ENCODE measurements at regions of chr4 and their contacts with region 1.

Region 1: DNA sequence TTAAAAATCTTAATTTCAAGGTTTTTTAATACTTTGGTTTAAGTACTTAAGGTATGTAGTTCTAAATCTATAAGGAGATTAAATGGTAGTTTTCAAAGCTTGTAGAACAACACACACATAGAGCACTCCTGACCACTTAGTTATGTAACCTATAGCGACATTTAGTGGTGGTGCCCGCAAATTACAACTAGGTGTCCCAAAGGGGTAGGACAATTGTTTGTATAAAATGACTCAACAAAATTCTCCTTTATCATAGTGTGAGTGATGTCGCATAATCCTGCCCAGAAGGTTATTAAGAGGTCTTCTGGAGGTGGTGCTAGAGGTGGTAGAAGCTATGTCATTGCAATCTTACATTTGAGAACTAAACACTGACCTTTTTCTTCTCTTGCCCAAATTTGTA is 373.0 kb upstream of the RASGEF1B start:
- DNase-seq: peak; percentile 80 to 89 (median 84)
- ATAC-seq: peak; percentile 94
- H3K4me3 ChIP-seq: no peak overlapping the region
- H3K27ac ChIP-seq: no peak overlapping the region
- H3K4me1 ChIP-seq: no peaks in the 10 kb centered on the region
- H3K27me3 ChIP-seq: no peaks in the 10 kb centered on the region
- CTCF ChIP-seq: peak; percentile 38 to 87 (median 81)
- POLR2A ChIP-seq: no peak

Region 2: DNA sequence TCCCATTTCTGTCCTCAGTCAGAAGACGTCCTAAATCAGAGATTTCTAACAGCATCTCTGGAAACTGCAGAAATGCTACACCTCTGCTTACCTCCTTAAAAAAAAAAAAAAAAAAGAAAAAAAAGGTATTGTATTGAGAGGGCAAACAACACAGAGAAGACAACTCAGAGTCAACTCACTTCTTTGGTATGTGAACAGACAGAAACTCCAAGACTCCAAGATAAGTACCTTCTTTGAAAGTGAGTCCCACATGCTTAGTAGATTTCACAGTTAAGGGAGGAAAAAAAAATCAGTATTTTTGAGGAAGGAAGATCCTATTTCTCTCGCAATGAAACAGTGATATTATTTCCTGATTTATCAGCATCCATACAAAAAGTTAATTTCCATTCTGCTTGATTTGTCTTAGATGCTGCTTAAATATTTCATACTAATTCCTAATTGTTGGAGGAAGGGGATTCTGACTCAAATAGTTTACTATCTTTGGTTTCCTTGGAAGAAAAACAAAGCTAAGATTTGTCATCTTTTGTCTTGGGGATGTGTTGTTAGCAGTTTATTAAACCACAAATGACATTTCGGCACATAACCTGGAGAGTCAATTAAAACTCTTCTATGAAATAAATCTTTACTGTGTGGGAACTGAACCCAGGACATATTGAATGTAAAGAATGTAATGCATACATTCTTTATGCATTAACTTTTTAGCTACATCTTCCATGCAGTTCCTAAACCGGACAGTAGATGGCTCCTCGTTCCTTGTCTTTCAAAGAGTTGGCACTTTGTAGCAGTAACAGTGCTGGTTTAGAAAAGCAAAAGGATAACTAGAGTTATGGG is 377.7 kb before region 1 on chr4:
- intact Hi-C with region 1: loop called (anchors 5 kb)
- DNase-seq: peak; percentile 71 to 80 (median 75)
- ATAC-seq: no peak
- H3K4me3 ChIP-seq: no peak overlapping the region
- H3K27ac ChIP-seq: no peak overlapping the region
- H3K4me1 ChIP-seq: peaks cover 15% of the 10 kb centered on the region
- H3K27me3 ChIP-seq: no peaks in the 10 kb centered on the region
- CTCF ChIP-seq: peak; percentile 56 to 93 (median 88)
- POLR2A ChIP-seq: no peak

Region 3: GRCh38 chr4:81796790-81797528 is 47.8 kb before region 1 on chr4:
- intact Hi-C with region 1: no loop called
- DNase-seq: no peak
- ATAC-seq: no peak
- H3K4me3 ChIP-seq: no peak overlapping the region
- H3K27ac ChIP-seq: no peak overlapping the region
- H3K4me1 ChIP-seq: no peaks in the 10 kb centered on the region
- H3K27me3 ChIP-seq: no peaks in the 10 kb centered on the region
- CTCF ChIP-seq: no peak
- POLR2A ChIP-seq: no peak

Region 4: DNA sequence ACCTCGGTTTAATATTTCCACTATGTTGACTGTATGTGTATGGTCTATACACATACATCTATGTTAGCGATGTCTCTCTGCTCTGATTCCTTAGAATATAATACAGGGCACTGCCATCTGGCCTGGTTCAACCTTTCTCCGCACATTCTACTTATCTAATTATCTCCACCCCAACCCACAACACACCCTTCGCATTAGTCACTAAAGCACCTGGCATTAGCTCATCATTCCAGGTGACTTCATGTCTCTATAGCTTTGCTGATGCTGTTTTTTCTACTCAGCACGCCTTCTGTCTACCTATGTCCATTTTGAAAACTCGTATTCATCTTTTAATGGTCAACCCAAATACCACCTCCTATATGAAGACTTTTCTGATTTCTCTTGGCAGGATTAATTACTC is 52.2 kb after region 1 on chr4:
- intact Hi-C with region 1: no loop called
- DNase-seq: peak in 1 of 4 donors; percentile 5
- ATAC-seq: no peak
- H3K4me3 ChIP-seq: no peak overlapping the region
- H3K27ac ChIP-seq: no peak overlapping the region
- H3K4me1 ChIP-seq: no peaks in the 10 kb centered on the region
- H3K27me3 ChIP-seq: no peaks in the 10 kb centered on the region
- CTCF ChIP-seq: no peak
- POLR2A ChIP-seq: no peak

Region 5: DNA sequence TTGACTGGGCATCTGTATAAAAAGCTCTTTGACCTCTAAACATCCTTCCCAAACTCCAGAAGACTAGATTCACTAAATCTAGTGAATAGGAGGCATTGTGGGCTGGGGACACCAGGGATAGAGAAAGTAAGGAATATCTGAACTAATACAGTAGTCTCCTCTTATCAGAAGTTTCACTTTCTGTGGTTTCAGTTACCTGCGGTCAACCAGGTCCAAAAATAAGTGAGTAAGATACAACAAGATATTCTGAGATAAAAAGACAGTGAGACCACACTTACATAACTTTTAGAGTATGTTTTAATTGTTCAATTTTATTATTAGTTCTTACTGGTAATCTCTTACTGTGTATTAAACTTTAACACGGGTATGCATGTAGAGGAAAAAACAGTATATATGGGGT is 152.6 kb after region 1 on chr4:
- intact Hi-C with region 1: no loop called
- DNase-seq: no peak
- ATAC-seq: no peak
- H3K4me3 ChIP-seq: no peak overlapping the region
- H3K27ac ChIP-seq: no peak overlapping the region
- H3K4me1 ChIP-seq: no peaks in the 10 kb centered on the region
- H3K27me3 ChIP-seq: no peaks in the 10 kb centered on the region
- CTCF ChIP-seq: no peak
- POLR2A ChIP-seq: no peak